K562 (cell line): ENCODE measurements at regions of chr22 and their contacts with region 1.

Region 1: DNA sequence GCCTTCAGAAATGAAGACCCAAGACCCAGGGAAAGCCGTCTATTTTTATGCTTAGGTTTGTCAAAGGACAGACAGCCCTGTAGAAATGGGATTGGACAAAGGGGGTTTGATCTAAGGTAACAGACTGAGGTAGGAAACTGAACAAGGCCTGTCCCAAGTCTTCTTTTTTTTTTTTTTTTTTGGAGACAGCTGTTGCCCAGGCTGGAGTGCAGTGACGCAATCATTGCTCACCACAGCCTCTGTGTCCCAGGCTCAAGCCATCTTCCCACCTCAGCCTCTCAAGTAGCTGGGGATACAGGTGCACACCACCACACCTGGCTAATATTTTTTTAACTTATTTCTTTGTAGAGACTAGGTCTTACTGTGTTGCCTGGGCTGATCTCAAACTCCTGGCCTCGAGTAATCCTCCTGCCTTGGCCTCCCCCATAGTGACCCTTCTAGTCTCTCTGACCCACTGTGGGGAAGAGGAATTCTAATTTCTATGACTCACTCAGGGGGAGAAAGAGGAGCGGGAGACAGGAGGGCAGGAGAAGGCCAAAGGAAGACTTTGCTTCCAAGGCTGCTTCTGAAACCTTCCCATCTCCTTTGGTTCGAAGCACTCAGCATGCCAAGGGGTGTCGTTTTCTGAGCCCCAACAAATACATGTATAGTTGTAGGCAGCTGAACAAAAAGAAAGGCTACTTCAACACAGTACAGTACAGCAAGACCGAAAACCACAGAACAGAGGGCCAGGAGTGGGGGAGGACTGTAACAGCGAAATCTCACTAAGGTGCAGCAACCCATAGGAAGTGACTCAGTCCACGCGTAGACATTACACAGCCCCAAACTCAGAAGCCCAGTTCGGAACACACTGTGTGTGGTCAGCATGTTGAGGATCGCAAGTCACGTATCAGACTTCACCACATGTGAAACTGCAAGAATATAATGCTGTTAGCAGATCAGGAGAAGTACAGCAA is 872 bp downstream of the TMA7B start:
- DNase-seq: peak; percentile 74 to 89 (median 77)
- ATAC-seq: peak; percentile 89
- H3K4me3 ChIP-seq: no peak overlapping the region
- H3K27ac ChIP-seq: peak overlapping the region; percentile 95
- H3K4me1 ChIP-seq: peaks cover 24 to 52% of the 10 kb centered on the region in 2 experiments
- H3K27me3 ChIP-seq: no peaks in the 10 kb centered on the region
- CTCF ChIP-seq: no peak
- EP300 ChIP-seq: peak; percentile 86; the same call in 1 of the 2 replicates
- POLR2A ChIP-seq: 0 out of 2 replicates have a peak, but pooled peaks have one; percentile 21
- RAD21 ChIP-seq: no peak; a peak in 1 of 4 replicates

Region 2: DNA sequence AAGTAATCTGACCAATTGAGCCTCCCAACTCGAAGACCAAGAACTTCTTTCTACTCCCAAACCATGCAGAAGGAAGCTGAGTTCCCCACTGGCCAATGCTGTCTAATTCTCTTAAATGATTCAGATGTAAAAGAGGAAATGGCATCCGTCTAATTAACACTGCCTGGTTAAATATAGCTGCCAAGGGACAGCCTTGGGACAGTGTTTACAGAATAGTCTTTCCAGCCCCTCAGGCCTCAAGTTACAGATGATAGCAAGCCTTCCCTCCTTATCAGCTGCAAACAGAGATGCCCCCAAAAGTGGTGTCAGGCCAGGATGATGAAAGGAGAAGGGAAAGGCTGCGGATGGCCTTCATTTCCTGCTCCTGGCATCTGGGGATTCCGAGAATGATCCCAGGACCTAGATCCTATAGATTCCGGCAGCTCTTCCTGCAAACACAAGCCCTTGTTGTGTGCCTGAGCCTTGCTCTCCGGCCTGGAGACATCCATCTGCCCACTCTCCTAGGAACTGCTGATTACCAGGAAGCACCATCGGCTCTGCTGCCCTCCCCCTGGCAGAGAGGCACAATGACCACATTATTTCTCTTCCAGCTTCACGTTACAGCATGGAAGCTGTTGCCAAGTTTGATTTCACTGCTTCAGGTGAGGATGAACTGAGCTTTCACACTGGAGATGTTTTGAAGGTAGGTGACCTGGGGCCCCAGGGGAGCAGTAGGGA is 14.4 kb before region 1 on chr22:
- CTCF ChIA-PET with region 1: no interaction called
- POLR2A ChIA-PET with region 1: interaction called, 13 read pairs
- in situ Hi-C with region 1: no loop called
- intact Hi-C with region 1: no loop called
- DNase-seq: peak; percentile 78 to 90 (median 80)
- ATAC-seq: peak; percentile 73
- H3K4me3 ChIP-seq: peak overlapping the region; percentile 55
- H3K27ac ChIP-seq: peak overlapping the region; percentile 93
- H3K4me1 ChIP-seq: peaks cover 16 to 56% of the 10 kb centered on the region in 2 experiments; a peak in 4 of 5 replicates
- H3K27me3 ChIP-seq: no peaks in the 10 kb centered on the region
- CTCF ChIP-seq: no peak
- EP300 ChIP-seq: peak; percentile 95
- POLR2A ChIP-seq: peak; percentile 59
- RAD21 ChIP-seq: peak in 1 of 2 experiments; percentile 12; a peak in 1 of 4 replicates